ENCODE measurements at regions of chr11 and their contacts with region 1.

Region 1: DNA sequence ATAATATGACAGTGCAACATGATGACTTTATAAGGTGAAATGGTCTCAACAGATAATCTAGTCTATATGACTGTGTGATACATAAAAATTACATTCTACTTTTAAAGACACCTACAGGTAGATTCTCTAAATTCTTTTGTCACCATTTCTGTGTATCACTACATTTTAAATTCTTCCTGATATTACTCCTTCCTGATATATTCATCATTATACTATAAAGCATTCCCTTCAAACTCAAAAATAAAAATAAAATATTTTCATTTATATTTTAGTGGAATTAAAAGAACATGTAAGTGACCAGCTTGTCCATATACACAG is 1062.3 kb downstream of the DLG2 start:
- DNase-seq: no peak
- H3K4me3 ChIP-seq: no peak overlapping the region
- H3K27ac ChIP-seq: no peak overlapping the region
- H3K4me1 ChIP-seq: peaks cover 0 to 5% (median 3%) of the 10 kb centered on the region in 4 donors
- H3K27me3 ChIP-seq: no peaks in the 10 kb centered on the region
- CTCF ChIP-seq: no peak
- EP300 ChIP-seq: no peak
- POLR2A ChIP-seq: no peak

Region 2: DNA sequence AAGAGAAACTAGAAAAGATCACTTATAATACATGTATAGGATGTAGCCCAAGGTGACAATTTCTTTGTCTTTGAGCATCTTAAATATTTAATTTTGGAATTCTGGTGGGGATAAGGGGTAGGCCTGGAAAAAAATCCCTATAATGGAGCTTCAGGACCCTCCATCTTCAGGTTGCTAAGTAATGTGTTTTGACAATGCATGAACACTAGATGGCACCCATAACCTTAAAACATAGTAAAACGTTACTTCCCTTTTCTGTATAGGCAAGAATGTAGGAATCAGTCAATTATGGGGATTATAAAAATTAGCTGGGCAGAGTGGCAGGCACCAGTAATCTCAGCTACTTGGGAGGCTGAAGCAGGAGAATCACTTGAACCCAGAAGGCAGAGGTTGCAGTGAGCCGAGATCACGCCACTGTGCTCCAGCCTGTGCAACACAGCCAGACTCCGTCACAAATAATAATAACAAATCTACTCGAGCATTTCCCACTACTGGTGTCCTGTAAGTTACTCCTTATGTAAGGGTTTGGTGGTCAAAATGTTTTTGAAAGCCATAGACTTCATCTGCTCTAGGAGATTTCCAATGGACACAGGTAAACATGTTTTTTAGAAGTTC is 736.8 kb before region 1 on chr11:
- in situ Hi-C with region 1: loop called in 2 of 4 experiments (anchors 25 kb)
- intact Hi-C with region 1: loop called (anchors 5 kb)
- DNase-seq: no peak
- H3K4me3 ChIP-seq: peak overlapping the region in 2 of 4 donors; percentile 11 to 15
- H3K27ac ChIP-seq: no peak overlapping the region
- H3K4me1 ChIP-seq: no peaks in the 10 kb centered on the region
- H3K27me3 ChIP-seq: no peaks in the 10 kb centered on the region
- CTCF ChIP-seq: peak in 3 of 5 experiments; percentile 32 to 45 (median 38)
- EP300 ChIP-seq: no peak
- POLR2A ChIP-seq: no peak

Region 3: DNA sequence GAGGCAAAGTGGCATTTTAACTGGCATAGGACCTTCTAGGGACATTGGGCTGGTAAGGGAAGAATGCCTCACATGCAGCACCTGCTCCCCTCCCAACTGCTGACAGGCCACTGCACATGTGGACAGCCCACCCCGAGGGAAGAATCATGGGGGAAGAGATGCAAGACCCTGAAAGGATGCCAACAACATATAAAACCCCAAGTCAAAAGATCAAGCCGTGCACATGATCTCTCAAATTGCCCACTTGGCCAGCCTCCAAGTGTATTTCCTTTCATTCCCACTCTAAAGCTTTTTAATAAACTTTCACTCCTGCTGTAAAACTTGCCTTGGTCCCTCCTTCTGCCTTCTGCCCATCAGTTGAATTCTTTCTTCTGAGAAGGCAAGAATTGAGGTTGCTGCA is 330.8 kb before region 1 on chr11:
- in situ Hi-C with region 1: no loop called
- intact Hi-C with region 1: no loop called
- DNase-seq: no peak
- H3K4me3 ChIP-seq: no peak overlapping the region
- H3K27ac ChIP-seq: no peak overlapping the region
- H3K4me1 ChIP-seq: no peaks in the 10 kb centered on the region
- H3K27me3 ChIP-seq: no peaks in the 10 kb centered on the region
- CTCF ChIP-seq: no peak
- EP300 ChIP-seq: no peak
- POLR2A ChIP-seq: no peak

Region 4: DNA sequence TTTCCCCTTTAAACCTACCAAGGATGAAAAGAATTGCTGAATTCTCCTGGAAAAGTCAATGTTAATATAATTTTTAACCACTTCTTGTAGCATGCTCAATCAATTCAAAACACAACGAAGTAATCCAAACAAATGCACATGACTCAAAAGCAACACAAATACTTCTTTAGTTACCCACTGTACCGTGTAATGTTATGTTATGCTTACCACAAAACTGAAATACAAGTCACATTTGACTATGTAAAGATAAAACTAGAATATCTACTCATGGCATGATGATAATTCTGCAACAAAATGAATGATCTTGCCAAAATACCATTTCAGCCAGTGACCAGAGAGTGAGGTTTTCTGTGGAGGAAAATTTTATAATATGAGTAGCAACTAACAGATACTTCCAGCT is 475.3 kb after region 1 on chr11:
- in situ Hi-C with region 1: no loop called
- intact Hi-C with region 1: no loop called
- DNase-seq: no peak
- H3K4me3 ChIP-seq: no peak overlapping the region
- H3K27ac ChIP-seq: no peak overlapping the region
- H3K4me1 ChIP-seq: peaks cover 0 to 19% (median 6%) of the 10 kb centered on the region in 4 donors
- H3K27me3 ChIP-seq: no peaks in the 10 kb centered on the region
- CTCF ChIP-seq: no peak
- EP300 ChIP-seq: no peak
- POLR2A ChIP-seq: no peak